MCF 10A (cell line): ENCODE measurements at regions of chr14 and their contacts with region 1.

Region 1: GRCh38 chr14:23567192-23568020 is at the start of gene AP1G2:
- DNase-seq: peak; percentile 90
- H3K4me3 Mint-ChIP-seq: peak within 1 kb of the TSS; percentile 99
- H3K27ac Mint-ChIP-seq: peak within 1 kb of the TSS; percentile 91
- H3K4me1 Mint-ChIP-seq: peaks cover 26% of the 10 kb centered on the region
- H3K27me3 Mint-ChIP-seq: no peaks in the 10 kb centered on the region
- CTCF ChIP-seq: no peak
- total RNA-seq, gene AP1G2: 89.2 and 95.7 TPM in 2 replicates

Region 2: GRCh38 chr14:23269193-23269592 is 298.2 kb before region 1 on chr14:
- CTCF ChIA-PET with region 1: interaction called, 4 read pairs
- POLR2A ChIA-PET with region 1: interaction called, 4 read pairs
- intact Hi-C with region 1: loop called (anchors 1 kb)
- DNase-seq: no peak
- H3K4me3 Mint-ChIP-seq: no peak overlapping the region
- H3K27ac Mint-ChIP-seq: no peak overlapping the region
- H3K4me1 Mint-ChIP-seq: no peaks in the 10 kb centered on the region
- H3K27me3 Mint-ChIP-seq: no peaks in the 10 kb centered on the region
- CTCF ChIP-seq: no peak

Region 3: GRCh38 chr14:23327947-23328744 is 239.3 kb before region 1 on chr14:
- CTCF ChIA-PET with region 1: interaction called, 3 read pairs
- POLR2A ChIA-PET with region 1: no interaction called
- intact Hi-C with region 1: loop called (anchors 1 kb)
- DNase-seq: peak; percentile 78
- H3K4me3 Mint-ChIP-seq: no peak overlapping the region
- H3K27ac Mint-ChIP-seq: no peak overlapping the region
- H3K4me1 Mint-ChIP-seq: peaks cover 11% of the 10 kb centered on the region
- H3K27me3 Mint-ChIP-seq: no peaks in the 10 kb centered on the region
- CTCF ChIP-seq: peak; percentile 80

Region 4: GRCh38 chr14:23528555-23528954 is 38.9 kb before region 1 on chr14:
- CTCF ChIA-PET with region 1: interaction called, 4 read pairs
- POLR2A ChIA-PET with region 1: interaction called, 3 read pairs
- intact Hi-C with region 1: loop called (anchors 1 kb)
- DNase-seq: no peak
- H3K4me3 Mint-ChIP-seq: no peak overlapping the region
- H3K27ac Mint-ChIP-seq: no peak overlapping the region
- H3K4me1 Mint-ChIP-seq: no peaks in the 10 kb centered on the region
- H3K27me3 Mint-ChIP-seq: no peaks in the 10 kb centered on the region
- CTCF ChIP-seq: peak; percentile 7

Region 5: DNA sequence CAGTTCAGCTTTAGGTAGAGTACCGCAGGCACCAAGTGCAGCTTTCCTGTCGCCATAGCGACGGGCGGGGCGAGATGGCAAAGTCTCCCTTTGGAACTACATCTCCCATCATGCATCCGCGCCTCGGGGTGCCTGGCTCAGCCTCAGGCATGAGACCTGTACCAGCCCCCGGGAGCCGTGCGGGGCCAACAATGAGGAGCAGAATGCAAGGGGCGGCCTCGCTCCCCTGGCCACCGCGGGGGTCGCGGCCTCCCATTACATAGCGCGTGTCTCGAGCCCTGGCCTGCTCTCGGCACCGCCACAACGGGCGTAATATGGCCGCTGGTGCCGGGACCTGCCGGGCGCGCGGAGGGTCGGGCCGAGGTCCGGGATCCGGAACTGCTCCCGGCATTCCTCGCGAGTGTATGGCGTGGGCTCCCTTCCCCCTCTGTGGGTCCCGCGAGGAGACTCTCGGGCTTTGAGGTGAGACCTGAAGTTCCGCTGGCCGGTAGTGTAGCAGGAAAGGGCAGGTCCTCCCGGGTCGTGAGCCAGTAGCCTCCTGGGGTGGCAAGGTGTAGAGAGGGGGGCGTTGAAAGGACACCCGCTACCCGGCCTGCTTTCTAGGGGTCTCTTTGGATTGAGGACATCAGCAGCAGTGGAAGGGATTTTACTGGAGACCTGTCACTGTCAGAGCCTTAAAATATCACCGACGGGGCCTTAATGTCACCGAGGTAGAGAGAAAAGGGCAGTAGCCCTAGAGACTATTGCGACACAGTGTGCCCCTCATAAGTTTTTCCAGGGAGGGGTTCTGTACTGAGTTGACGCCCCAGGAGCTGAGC is 11.3 kb before region 1 on chr14 and contains the start of gene THTPA:
- CTCF ChIA-PET with region 1: interaction called, 57 read pairs
- POLR2A ChIA-PET with region 1: interaction called, 16 read pairs
- intact Hi-C with region 1: no loop called
- DNase-seq: peak; percentile 89
- H3K4me3 Mint-ChIP-seq: peak within 1 kb of the TSS; percentile 92
- H3K27ac Mint-ChIP-seq: peak within 1 kb of the TSS; percentile 95
- H3K4me1 Mint-ChIP-seq: peaks cover 13% of the 10 kb centered on the region
- H3K27me3 Mint-ChIP-seq: no peaks in the 10 kb centered on the region
- CTCF ChIP-seq: no peak
- total RNA-seq, gene THTPA: 16.8 and 22.4 TPM in 2 replicates

Region 6: DNA sequence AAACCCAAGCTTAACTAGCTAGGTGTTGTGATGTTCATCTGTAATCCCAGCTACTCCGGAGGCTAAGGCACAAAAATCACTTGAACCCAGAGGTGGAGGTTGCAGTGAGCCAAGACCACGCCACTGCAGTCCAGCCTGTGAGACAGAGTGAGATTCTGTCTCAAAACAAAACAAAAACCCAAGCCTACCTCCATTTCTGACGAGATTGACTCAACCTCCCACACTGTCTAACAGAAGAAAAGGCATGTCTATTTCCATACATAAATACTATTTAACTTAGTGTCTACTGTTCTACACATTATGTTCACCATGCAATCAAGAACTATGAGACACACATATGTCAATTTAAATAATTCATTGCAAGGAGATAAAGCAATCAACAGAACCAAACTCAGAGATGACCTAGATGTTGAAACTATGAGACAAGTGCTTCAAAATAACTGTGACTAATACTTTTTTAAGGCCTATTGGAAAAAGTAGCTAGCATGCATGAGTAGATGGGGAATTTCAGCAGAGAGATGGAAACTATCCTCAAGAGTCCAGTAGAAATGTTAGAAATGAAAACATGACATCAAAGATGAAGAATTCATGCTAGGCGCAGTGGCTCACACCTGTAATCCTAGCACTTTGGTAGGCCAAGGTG is 310.3 kb after region 1 on chr14:
- CTCF ChIA-PET with region 1: no interaction called
- POLR2A ChIA-PET with region 1: no interaction called
- intact Hi-C with region 1: no loop called
- DNase-seq: no peak
- H3K4me3 Mint-ChIP-seq: no peak overlapping the region
- H3K27ac Mint-ChIP-seq: no peak overlapping the region
- H3K4me1 Mint-ChIP-seq: no peaks in the 10 kb centered on the region
- H3K27me3 Mint-ChIP-seq: no peaks in the 10 kb centered on the region
- CTCF ChIP-seq: no peak

Region 7: DNA sequence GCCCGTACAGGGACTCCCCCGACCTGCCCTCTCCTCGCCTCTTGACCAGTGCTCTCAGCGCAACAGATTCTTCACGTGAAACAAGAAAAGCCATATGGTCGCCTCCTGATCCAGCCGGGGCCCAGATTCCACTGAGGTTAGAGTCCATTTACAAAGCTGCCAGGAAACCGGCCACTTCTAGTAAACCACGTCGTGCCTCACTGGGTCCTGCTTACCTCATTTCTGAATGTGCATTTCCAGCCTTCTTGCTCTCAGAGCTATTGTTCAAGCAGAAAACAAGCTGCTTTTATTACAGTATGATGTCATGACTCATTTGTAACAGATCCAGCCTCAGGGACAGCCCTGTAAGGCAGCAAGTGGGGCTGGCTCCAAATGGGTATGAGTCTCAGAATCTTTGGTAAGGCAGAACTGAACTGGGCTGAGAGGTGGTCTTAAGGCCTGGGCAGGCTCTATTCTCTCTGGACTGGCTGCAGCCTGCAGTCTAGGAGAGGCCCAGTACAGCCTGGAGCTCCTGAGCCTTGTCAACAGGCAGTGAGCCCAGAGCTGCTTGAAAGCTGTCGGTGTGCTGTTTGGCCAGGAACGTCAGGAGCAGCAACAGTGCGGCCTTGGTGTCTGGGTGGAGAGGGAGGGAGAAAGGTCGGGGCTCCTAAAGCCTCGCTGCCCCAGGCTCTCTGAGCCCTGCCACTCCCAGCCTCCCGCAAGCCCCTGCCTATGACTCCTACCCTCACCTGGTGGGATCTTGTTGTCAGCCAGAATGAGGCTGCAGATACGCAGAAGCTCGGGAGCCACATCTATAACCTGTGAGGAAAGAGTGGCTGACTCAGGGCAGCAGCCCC is 612.8 kb after region 1 on chr14:
- CTCF ChIA-PET with region 1: no interaction called
- POLR2A ChIA-PET with region 1: no interaction called
- intact Hi-C with region 1: no loop called
- DNase-seq: no peak
- H3K4me3 Mint-ChIP-seq: no peak overlapping the region
- H3K27ac Mint-ChIP-seq: no peak overlapping the region
- H3K4me1 Mint-ChIP-seq: no peaks in the 10 kb centered on the region
- H3K27me3 Mint-ChIP-seq: no peaks in the 10 kb centered on the region
- CTCF ChIP-seq: no peak